ENCODE measurements at regions of chr14 and their contacts with region 1.

Region 1: GRCh38 chr14:39266871-39267591 is 33.3 kb downstream of the MIA2 start:
- DNase-seq: peak; percentile 95
- ATAC-seq: peak; percentile 82
- H3K4me3 ChIP-seq: peak overlapping the region; percentile 85 to 99 (median 89)
- H3K4me3 Mint-ChIP-seq: peak overlapping the region; percentile 98
- H3K27ac ChIP-seq: peak overlapping the region; percentile 97 to 100
- H3K27ac Mint-ChIP-seq: peak overlapping the region; percentile 99
- H3K4me1 ChIP-seq: peaks cover 20 to 32% of the 10 kb centered on the region in 2 donors
- H3K4me1 Mint-ChIP-seq: peaks cover 42% of the 10 kb centered on the region
- H3K27me3 ChIP-seq: no peaks in the 10 kb centered on the region
- H3K27me3 Mint-ChIP-seq: no peaks in the 10 kb centered on the region
- CTCF ChIP-seq: no peak

Region 2: DNA sequence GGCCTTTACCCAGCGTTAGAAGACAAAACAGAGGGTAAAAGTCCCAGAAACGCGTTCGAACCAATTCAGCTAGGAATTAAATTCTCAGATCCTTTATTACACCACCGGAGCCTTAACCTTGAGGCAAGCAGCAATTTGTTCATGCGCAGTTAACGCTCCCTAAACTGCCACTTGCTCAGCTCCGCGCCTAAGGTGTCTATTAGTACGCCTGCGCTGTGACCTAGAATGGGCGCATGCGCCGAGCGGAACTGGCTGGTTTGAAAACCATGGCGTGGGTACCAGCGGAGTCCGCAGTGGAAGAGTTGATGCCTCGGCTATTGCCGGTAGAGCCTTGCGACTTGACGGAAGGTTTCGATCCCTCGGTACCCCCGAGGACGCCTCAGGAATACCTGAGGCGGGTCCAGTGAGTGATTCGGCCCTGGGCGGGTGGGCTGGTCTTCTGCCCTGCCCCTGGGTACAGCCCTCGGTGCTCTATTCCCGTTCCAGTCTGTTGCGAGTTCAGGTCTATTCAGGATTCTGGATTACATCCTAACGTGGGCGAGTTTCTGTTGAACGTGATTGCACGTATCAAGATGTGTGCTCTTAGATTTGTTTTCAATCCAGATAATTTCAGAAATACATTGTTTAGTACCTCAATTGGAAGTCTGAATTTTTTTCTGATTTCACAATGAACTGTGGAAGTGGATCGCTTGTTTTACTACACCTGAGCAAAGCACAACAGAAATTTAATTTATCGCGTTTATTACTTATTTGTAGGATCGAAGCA is 152.8 kb before region 1 on chr14 and contains the start of gene GEMIN2:
- CTCF ChIA-PET with region 1: no interaction called
- POLR2A ChIA-PET with region 1: no interaction called
- intact Hi-C with region 1: loop called (anchors 1 kb)
- DNase-seq: peak; percentile 96
- ATAC-seq: peak; percentile 99
- H3K4me3 ChIP-seq: peak within 1 kb of the TSS; percentile 68 to 85 (median 83)
- H3K4me3 Mint-ChIP-seq: peak within 1 kb of the TSS; percentile 93
- H3K27ac ChIP-seq: peak within 1 kb of the TSS; percentile 59 to 75
- H3K27ac Mint-ChIP-seq: peak within 1 kb of the TSS; percentile 92
- H3K4me1 ChIP-seq: peaks cover 13% of the 10 kb centered on the region in 2 donors
- H3K4me1 Mint-ChIP-seq: peaks cover 27% of the 10 kb centered on the region
- H3K27me3 ChIP-seq: no peaks in the 10 kb centered on the region
- H3K27me3 Mint-ChIP-seq: no peaks in the 10 kb centered on the region
- CTCF ChIP-seq: no peak
- total RNA-seq, gene GEMIN2: 13.4 and 18.2 TPM in 2 replicates

Region 3: DNA sequence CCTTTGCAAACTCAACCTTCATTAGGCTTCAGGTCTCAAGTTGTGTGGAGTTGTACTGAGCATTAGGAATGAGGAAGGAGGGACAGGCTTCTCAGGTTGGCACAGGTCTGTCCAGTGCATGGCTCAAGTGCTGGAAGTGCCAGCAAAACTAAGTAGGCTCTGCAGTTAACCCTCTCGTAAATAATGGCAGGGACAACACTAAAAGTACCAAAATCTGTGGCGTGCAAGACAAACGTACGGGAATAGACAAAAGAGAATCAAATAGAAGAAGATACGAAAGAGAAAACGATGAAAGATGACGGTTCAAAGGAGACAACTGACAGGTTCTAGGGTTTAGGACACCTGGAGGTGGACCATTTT is 97.5 kb before region 1 on chr14:
- CTCF ChIA-PET with region 1: interaction called, 7 read pairs
- POLR2A ChIA-PET with region 1: interaction called, 18 read pairs
- intact Hi-C with region 1: loop called (anchors 1 kb)
- DNase-seq: no peak
- ATAC-seq: no peak
- H3K4me3 ChIP-seq: peak overlapping the region; percentile 67 to 95 (median 81)
- H3K4me3 Mint-ChIP-seq: peak overlapping the region; percentile 95
- H3K27ac ChIP-seq: peak overlapping the region; percentile 87 to 92
- H3K27ac Mint-ChIP-seq: peak overlapping the region; percentile 99
- H3K4me1 ChIP-seq: peaks cover 19 to 29% of the 10 kb centered on the region in 2 donors
- H3K4me1 Mint-ChIP-seq: peaks cover 37% of the 10 kb centered on the region
- H3K27me3 ChIP-seq: no peaks in the 10 kb centered on the region
- H3K27me3 Mint-ChIP-seq: no peaks in the 10 kb centered on the region
- CTCF ChIP-seq: no peak

Region 4: DNA sequence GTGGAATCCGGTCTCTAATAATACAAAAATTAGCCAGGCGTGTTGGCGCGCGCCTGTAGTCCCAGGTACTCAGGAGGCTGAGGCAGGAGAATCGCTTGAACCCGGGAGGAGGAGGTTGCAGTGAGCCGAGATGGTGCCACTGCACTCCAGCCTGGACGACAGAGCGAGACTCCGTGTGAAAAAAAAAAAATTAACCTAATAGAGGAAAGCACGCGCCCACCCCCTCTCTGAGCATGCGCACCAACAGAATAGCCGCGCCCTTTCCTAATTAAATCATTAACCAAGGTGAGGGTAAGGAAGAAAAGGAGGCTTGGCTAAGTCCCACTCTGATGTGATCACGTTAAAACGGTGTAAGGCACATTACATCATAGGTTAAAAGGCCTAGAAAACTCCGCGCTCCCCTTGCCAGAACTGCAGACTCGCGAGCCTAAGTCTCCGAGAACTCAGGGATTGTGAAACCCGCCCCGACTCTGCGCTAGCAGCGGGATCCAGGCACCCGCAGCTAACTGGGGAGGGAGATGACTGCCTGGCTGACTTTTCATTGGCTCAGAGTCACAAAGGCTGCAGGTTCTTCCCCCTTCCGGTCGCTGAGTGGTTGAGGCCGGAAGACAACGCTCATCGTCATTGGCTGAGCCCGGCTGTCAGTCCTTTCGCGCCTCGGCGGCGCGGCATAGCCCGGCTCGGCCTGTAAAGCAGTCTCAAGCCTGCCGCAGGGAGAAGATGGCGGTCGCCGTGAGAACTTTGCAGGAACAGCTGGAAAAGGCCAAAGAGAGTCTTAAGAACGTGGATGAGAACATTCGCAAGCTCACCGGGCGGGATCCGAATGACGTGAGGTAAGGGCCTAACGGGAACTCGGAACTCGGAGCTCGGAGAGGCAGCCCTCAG is 92.2 kb before region 1 on chr14 and contains the start of gene PNN:
- CTCF ChIA-PET with region 1: interaction called, 7 read pairs
- POLR2A ChIA-PET with region 1: interaction called, 18 read pairs
- intact Hi-C with region 1: loop called (anchors 1 kb)
- DNase-seq: peak; percentile 99
- ATAC-seq: peak; percentile 82
- H3K4me3 ChIP-seq: peak within 1 kb of the TSS; percentile 80 to 97 (median 85)
- H3K4me3 Mint-ChIP-seq: peak within 1 kb of the TSS; percentile 97
- H3K27ac ChIP-seq: peak within 1 kb of the TSS; percentile 92 to 95
- H3K27ac Mint-ChIP-seq: peak within 1 kb of the TSS; percentile 99
- H3K4me1 ChIP-seq: peaks cover 15 to 24% of the 10 kb centered on the region in 2 donors
- H3K4me1 Mint-ChIP-seq: peaks cover 35% of the 10 kb centered on the region
- H3K27me3 ChIP-seq: no peaks in the 10 kb centered on the region
- H3K27me3 Mint-ChIP-seq: no peaks in the 10 kb centered on the region
- CTCF ChIP-seq: no peak
- total RNA-seq, gene PNN: 131 and 134 TPM in 2 replicates

Region 5: GRCh38 chr14:39241637-39242036 is 25.4 kb before region 1 on chr14:
- CTCF ChIA-PET with region 1: no interaction called
- POLR2A ChIA-PET with region 1: no interaction called
- intact Hi-C with region 1: no loop called
- DNase-seq: no peak
- ATAC-seq: no peak
- H3K4me3 ChIP-seq: no peak overlapping the region
- H3K4me3 Mint-ChIP-seq: no peak overlapping the region
- H3K27ac ChIP-seq: no peak overlapping the region
- H3K27ac Mint-ChIP-seq: no peak overlapping the region
- H3K4me1 ChIP-seq: no peaks in the 10 kb centered on the region
- H3K4me1 Mint-ChIP-seq: no peaks in the 10 kb centered on the region
- H3K27me3 ChIP-seq: no peaks in the 10 kb centered on the region
- H3K27me3 Mint-ChIP-seq: peaks cover 9% of the 10 kb centered on the region
- CTCF ChIP-seq: no peak

Region 6: GRCh38 chr14:39432179-39432618 is 165.2 kb after region 1 on chr14 and contains the start of gene FBXO33:
- CTCF ChIA-PET with region 1: interaction called, 7 read pairs
- POLR2A ChIA-PET with region 1: interaction called, 33 read pairs
- intact Hi-C with region 1: loop called (anchors 1 kb)
- DNase-seq: peak; percentile 99
- ATAC-seq: peak; percentile 75
- H3K4me3 ChIP-seq: peak within 1 kb of the TSS; percentile 85 to 95 (median 92)
- H3K4me3 Mint-ChIP-seq: peak within 1 kb of the TSS; percentile 99
- H3K27ac ChIP-seq: peak within 1 kb of the TSS; percentile 100
- H3K27ac Mint-ChIP-seq: peak within 1 kb of the TSS; percentile 100
- H3K4me1 ChIP-seq: peaks cover 24 to 30% of the 10 kb centered on the region in 2 donors
- H3K4me1 Mint-ChIP-seq: peaks cover 39% of the 10 kb centered on the region
- H3K27me3 ChIP-seq: no peaks in the 10 kb centered on the region
- H3K27me3 Mint-ChIP-seq: no peaks in the 10 kb centered on the region
- CTCF ChIP-seq: no peak
- total RNA-seq, gene FBXO33: 17.3 and 18.1 TPM in 2 replicates